WTC11 (cell line): ENCODE measurements at regions of chr6 and their contacts with region 1.

Region 1: DNA sequence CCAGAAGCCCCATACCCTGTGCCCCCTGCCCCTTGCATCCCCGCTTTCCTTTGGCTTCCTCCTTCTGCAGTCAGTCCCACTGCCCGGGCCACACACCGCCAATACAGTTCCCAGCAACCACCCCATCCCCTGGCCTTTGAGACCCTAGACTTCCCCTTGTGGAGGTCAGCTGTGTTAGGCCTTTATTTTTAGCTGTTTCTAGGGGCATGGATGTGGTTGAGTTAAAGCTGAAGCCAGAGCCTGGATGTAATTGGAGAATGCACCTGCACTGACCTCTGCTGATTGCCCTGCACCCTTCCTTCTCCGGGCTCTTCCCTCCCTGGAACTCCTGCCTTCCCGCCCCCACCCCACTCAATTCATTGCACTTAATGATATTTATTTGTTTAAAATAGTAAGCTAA is 33.9 kb downstream of the LYRM2 start:
- DNase-seq: peak; percentile 28
- ATAC-seq: peak; percentile 88
- H3K4me3 Mint-ChIP-seq: no peak overlapping the region
- H3K27ac Mint-ChIP-seq: no peak overlapping the region
- H3K4me1 Mint-ChIP-seq: 0 out of 2 replicates have a peak, but pooled peaks cover under 1% of the 10 kb centered on the region
- H3K27me3 Mint-ChIP-seq: no peaks in the 10 kb centered on the region
- CTCF ChIP-seq: no peak

Region 2: DNA sequence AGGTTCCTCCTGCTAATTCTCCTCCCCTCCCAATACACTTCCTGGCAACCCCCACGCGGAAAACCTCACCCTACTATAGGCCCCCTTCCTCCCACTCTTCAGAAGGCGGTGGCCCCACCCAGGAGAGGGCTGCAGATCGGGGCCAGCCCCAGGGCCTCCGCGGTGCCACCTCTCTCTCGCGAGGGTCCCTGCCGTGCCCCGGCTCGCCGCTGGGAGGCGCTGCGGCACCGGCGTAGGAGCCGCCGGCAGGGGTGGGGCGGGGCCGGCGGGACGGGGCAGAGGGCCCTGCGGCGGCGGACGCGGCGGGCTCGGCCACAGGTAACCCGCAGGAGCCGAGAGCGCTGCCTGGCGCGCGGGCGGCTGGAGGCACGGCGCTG is 171.8 kb before region 1 on chr6 and contains the start of gene ANKRD6:
- CTCF ChIA-PET with region 1: interaction called, 61 read pairs
- POLR2A ChIA-PET with region 1: no interaction called
- DNase-seq: peak; percentile 84
- ATAC-seq: peak; percentile 87
- H3K4me3 Mint-ChIP-seq: peak within 1 kb of the TSS; percentile 83
- H3K27ac Mint-ChIP-seq: no peak within 1 kb of the TSS
- H3K4me1 Mint-ChIP-seq: peaks cover 33% of the 10 kb centered on the region
- H3K27me3 Mint-ChIP-seq: peaks cover 42% of the 10 kb centered on the region
- CTCF ChIP-seq: peak; percentile 97
- total RNA-seq, gene ANKRD6: 10.9 to 13.9 TPM (median 12.6 TPM) in 3 replicates

Region 3: DNA sequence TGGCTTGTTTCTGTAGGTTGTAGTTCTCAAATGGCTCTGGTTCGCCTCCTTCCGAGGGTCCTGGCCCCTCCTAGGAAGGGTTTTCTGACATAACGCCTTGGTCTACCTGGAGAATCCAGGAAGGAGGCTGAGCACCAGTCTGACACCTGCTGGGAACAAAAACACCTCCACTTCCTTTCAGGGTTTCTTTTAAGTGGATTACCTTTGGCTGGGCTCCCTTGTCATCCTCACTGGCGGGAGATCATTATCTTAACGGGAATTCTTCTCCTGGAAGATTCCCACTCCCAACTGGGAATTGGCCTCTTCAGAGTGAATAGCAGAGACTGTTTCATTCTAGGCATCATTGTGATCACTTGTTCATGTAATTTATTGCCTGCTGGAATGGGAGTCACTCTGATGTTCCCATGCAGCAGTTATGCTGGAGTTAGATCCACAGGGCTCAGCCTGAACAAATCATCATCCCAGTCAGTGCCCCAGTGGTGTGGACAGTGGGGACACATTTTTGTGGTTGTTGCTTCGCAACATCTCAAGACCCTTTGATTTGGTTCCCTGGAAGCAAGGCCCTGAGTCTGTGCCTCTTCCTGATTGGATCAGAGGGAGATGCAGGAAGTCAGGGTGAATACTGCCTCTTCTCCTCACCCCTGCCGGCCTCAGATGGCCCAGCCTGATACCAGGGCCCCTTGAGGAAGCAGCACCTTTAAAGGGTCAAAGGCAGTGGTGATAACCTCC is 15.2 kb before region 1 on chr6:
- CTCF ChIA-PET with region 1: no interaction called
- POLR2A ChIA-PET with region 1: no interaction called
- DNase-seq: peak; percentile 19
- ATAC-seq: peak; percentile 87
- H3K4me3 Mint-ChIP-seq: no peak overlapping the region
- H3K27ac Mint-ChIP-seq: no peak overlapping the region; the same call in 1 of the 2 replicates
- H3K4me1 Mint-ChIP-seq: peaks cover 15% of the 10 kb centered on the region
- H3K27me3 Mint-ChIP-seq: no peaks in the 10 kb centered on the region
- CTCF ChIP-seq: no peak

Region 4: DNA sequence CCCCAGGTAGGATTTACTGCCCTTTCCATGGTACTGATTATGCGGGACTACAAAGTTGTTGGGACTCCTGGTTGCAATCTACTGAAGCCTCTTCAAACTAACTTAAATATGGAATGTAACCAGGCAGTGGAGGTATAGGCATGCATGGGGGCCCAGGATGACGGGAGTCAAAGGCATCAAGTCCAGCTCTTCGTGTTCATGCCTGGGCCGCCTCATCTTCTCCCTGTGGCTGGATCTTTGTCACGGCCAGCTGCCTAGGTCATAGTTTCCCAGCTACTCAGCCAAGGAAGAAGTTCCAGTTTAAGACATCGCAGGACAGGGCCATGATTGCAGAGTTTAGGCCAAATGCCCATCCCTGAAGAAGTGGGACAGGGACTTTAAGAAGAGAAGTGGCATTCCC is 13.4 kb after region 1 on chr6:
- CTCF ChIA-PET with region 1: no interaction called
- POLR2A ChIA-PET with region 1: no interaction called
- DNase-seq: no peak
- ATAC-seq: no peak
- H3K4me3 Mint-ChIP-seq: no peak overlapping the region
- H3K27ac Mint-ChIP-seq: no peak overlapping the region
- H3K4me1 Mint-ChIP-seq: no peaks in the 10 kb centered on the region
- H3K27me3 Mint-ChIP-seq: no peaks in the 10 kb centered on the region
- CTCF ChIP-seq: no peak

Region 5: GRCh38 chr6:90131614-90132423 is 527.2 kb after region 1 on chr6:
- CTCF ChIA-PET with region 1: no interaction called
- POLR2A ChIA-PET with region 1: no interaction called
- DNase-seq: no peak
- ATAC-seq: no peak
- H3K4me3 Mint-ChIP-seq: no peak overlapping the region
- H3K27ac Mint-ChIP-seq: no peak overlapping the region
- H3K4me1 Mint-ChIP-seq: no peaks in the 10 kb centered on the region
- H3K27me3 Mint-ChIP-seq: no peaks in the 10 kb centered on the region
- CTCF ChIP-seq: no peak